Psoas muscle (tissue), 8 donors: ENCODE measurements at regions of chr19 and their contacts with region 1.

Region 1: GRCh38 chr19:662962-663681 is at the start of gene RNF126:
- DNase-seq: peak; percentile 96
- ATAC-seq: peak; percentile 85 to 89 (median 88)
- H3K4me3 ChIP-seq: peak within 1 kb of the TSS; percentile 100
- H3K27ac ChIP-seq: peak within 1 kb of the TSS; percentile 91
- H3K4me1 ChIP-seq: peaks cover 51% of the 10 kb centered on the region
- H3K27me3 ChIP-seq: no peaks in the 10 kb centered on the region
- CTCF ChIP-seq: no peak
- total RNA-seq, gene RNF126: 25.2 to 62.9 (median 50.4) TPM

Region 2: DNA sequence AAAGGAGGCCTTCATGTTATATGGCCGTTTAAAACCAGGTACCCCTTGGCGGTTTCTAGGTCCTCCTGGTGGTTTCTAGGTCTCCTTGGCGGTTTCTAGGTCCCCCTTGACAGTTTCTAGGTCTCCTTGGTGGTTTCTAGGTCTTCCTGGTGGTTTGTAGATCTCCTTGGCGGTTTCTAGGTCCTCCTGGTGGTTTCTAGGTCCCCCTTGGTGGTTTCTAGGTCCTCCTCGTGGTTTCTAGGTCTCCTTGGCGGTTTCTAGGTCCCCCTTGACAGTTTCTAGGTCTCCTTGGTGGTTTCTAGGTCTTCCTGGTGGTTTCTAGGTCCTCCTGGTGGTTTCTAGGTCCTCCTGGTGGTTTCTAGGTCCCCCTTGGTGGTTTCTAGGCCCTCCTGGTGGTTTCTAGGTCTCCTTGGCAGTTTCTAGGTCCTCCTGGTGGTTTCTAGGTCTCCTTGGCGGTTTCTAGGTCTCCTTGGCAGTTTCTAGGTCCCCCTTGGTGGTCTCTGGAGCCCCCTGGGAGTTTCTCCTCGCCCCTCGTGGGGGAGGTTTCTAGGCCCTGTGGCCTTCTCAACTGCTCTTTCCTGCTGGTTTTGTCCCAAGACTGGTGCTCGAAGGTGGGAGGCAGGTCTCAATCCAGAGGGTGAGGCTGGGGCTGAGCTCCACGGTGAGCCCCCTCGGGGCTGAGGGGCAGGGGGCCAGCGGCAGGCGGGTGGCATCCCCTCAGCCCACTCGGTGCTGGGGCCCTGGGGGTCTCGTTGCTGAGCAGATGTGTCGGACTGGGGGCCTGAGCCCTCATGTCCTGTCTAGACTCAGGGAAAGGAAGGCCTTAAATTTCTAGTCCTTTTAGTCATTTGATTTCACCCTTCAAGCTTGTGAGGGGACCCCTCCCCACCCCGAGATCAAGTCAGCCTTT is 65.5 kb before region 1 on chr19:
- intact Hi-C with region 1: loop called in 1 of 2 experiments (anchors 2 kb)
- DNase-seq: no peak
- ATAC-seq: no peak
- H3K4me3 ChIP-seq: no peak overlapping the region
- H3K27ac ChIP-seq: no peak overlapping the region
- H3K4me1 ChIP-seq: no peaks in the 10 kb centered on the region
- H3K27me3 ChIP-seq: peaks cover 0 to 23% (median 6%) of the 10 kb centered on the region in 3 donors
- CTCF ChIP-seq: no peak

Region 3: GRCh38 chr19:737581-738093 is 74.5 kb after region 1 on chr19:
- intact Hi-C with region 1: loop called (anchors 1 to 2 kb)
- DNase-seq: peak in 1 of 2 donors; percentile 51
- ATAC-seq: peak in 3 of 4 donors; percentile 61 to 67 (median 66)
- H3K4me3 ChIP-seq: no peak overlapping the region
- H3K27ac ChIP-seq: no peak overlapping the region
- H3K4me1 ChIP-seq: no peaks in the 10 kb centered on the region
- H3K27me3 ChIP-seq: peaks cover 0 to 11% (median 4%) of the 10 kb centered on the region in 3 donors
- CTCF ChIP-seq: peak; percentile 43

Region 4: GRCh38 chr19:748274-748598 is 85.1 kb after region 1 on chr19:
- intact Hi-C with region 1: no loop called
- DNase-seq: no peak
- ATAC-seq: no peak
- H3K4me3 ChIP-seq: no peak overlapping the region
- H3K27ac ChIP-seq: no peak overlapping the region
- H3K4me1 ChIP-seq: no peaks in the 10 kb centered on the region
- H3K27me3 ChIP-seq: peaks cover 0 to 25% (median 13%) of the 10 kb centered on the region in 3 donors
- CTCF ChIP-seq: no peak